ENCODE measurements at regions of chr7 and their contacts with region 1.

Region 1: GRCh38 chr7:21767300-21767900 is 178.3 kb downstream of the CDCA7L start:
- DNase-seq: peak in 1 of 10 donors; percentile 33
- H3K4me3 ChIP-seq: no peak overlapping the region
- H3K27ac ChIP-seq: no peak overlapping the region
- H3K27me3 ChIP-seq: peaks cover 0 to 6% (median 0%) of the 10 kb centered on the region in 45 donors
- CTCF ChIP-seq: peak in 54 of 56 donors; percentile 29 to 79 (median 56)

Region 2: GRCh38 chr7:21261627-21262594 is 505.5 kb before region 1 on chr7:
- intact Hi-C with region 1: loop called (anchors 5 to 10 kb)
- DNase-seq: peak in 3 of 10 donors; percentile 26 to 44 (median 42)
- H3K4me3 ChIP-seq: no peak overlapping the region
- H3K27ac ChIP-seq: no peak overlapping the region
- H3K27me3 ChIP-seq: peaks cover 0 to 33% (median 5%) of the 10 kb centered on the region in 45 donors
- CTCF ChIP-seq: peak in 51 of 56 donors; percentile 14 to 63 (median 47)

Region 3: DNA sequence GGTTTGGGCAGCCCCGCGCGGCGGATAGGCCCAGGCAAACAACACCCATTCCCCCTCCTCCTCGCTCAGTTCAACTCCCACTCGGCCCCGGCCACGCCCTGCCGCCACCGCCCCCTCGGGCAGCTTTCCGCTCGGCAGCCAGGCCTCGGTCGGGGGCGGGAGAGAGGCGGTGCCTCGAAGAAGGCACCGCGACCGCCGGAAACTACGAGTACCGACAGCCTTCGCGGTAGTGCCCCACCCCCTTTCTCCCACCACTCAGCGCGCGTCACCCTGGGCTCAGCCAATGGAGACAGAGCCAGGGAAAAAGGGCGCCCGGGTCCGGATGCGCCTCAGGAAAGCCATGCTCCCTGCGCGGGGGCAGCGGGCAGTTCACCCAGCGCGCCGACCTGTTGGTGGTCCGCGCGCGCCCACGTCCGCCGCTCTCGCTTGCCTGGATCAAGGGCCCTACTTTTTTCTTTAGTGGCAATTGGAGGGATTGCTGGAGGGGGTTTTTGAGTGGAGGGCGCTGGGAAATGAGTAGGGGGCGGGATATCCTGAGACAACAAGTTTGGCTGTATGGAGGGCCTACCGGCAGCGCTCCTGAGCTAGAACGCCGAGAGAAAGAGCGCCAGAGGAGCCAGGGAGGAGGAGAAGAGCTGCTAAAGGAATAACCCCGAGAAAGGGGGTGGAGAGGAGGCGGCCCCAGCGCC is 340.1 kb before region 1 on chr7:
- intact Hi-C with region 1: loop called in 1 of 2 experiments (anchors 5 kb)
- DNase-seq: peak; percentile 97 to 99 (median 98)
- H3K4me3 ChIP-seq: peak overlapping the region; percentile 53 to 98 (median 91)
- H3K27ac ChIP-seq: peak overlapping the region; percentile 67 to 99 (median 97)
- H3K27me3 ChIP-seq: no peaks in the 10 kb centered on the region
- CTCF ChIP-seq: peak in 37 of 56 donors; percentile 3 to 55 (median 31)

Region 4: GRCh38 chr7:21945454-21946227 is 178.2 kb after region 1 on chr7 and contains the start of gene CDCA7L:
- intact Hi-C with region 1: loop called in 1 of 2 experiments (anchors 10 kb)
- DNase-seq: peak; percentile 35 to 76 (median 57)
- H3K4me3 ChIP-seq: peak within 1 kb of the TSS; percentile 41 to 85 (median 70)
- H3K27ac ChIP-seq: peak within 1 kb of the TSS in 49 of 59 donors; percentile 19 to 88 (median 67)
- H3K27me3 ChIP-seq: peaks cover 0 to 36% (median 7%) of the 10 kb centered on the region in 45 donors
- CTCF ChIP-seq: peak in 12 of 56 donors; percentile 3 to 33 (median 18)
- total RNA-seq, gene CDCA7L: 4.7 to 28.4 (median 10.8) TPM

Region 5: GRCh38 chr7:22001345-22002004 is 234.1 kb after region 1 on chr7:
- intact Hi-C with region 1: loop called in 1 of 2 experiments (anchors 5 kb)
- DNase-seq: no peak
- H3K4me3 ChIP-seq: peak overlapping the region in 29 of 59 donors; percentile 2 to 51 (median 28)
- H3K27ac ChIP-seq: no peak overlapping the region
- H3K27me3 ChIP-seq: peaks cover 0 to 6% (median 0%) of the 10 kb centered on the region in 45 donors
- CTCF ChIP-seq: peak; percentile 72 to 98 (median 88)

Measured in dorsolateral prefrontal cortex (tissue), 120 donors.